K562 (cell line): ENCODE measurements at regions of chr21 and their contacts with region 1.

Region 1: GRCh38 chr21:45152265-45152746 is 77.9 kb downstream of the ADARB1 start:
- DNase-seq: peak; percentile 75 to 92 (median 84)
- ATAC-seq: peak; percentile 99
- H3K4me3 ChIP-seq: no peak overlapping the region; the same call in 1 of the 2 replicates
- H3K27ac ChIP-seq: peak overlapping the region; percentile 30; the same call in 1 of the 3 replicates
- H3K4me1 ChIP-seq: peaks cover 15 to 22% of the 10 kb centered on the region in 2 experiments; a peak in 4 of 5 replicates
- H3K27me3 ChIP-seq: no peaks in the 10 kb centered on the region
- CTCF ChIP-seq: peak; percentile 97
- EP300 ChIP-seq: peak; percentile 55; the same call in 1 of the 2 replicates
- POLR2A ChIP-seq: peak; percentile 44; the same call in 1 of the 2 replicates
- RAD21 ChIP-seq: peak; percentile 90 to 97

Region 2: GRCh38 chr21:45228171-45228641 is 75.9 kb after region 1 on chr21:
- CTCF ChIA-PET with region 1: no interaction called
- POLR2A ChIA-PET with region 1: no interaction called
- in situ Hi-C with region 1: no loop called
- intact Hi-C with region 1: loop called (anchors 5 kb)
- DNase-seq: no peak
- ATAC-seq: no peak
- H3K4me3 ChIP-seq: no peak overlapping the region
- H3K27ac ChIP-seq: no peak overlapping the region
- H3K4me1 ChIP-seq: peaks cover 0 to 5% of the 10 kb centered on the region in 2 experiments; a peak in 1 of 5 replicates
- H3K27me3 ChIP-seq: peaks cover 54 to 62% of the 10 kb centered on the region in 2 experiments
- CTCF ChIP-seq: no peak
- EP300 ChIP-seq: no peak
- POLR2A ChIP-seq: no peak
- RAD21 ChIP-seq: no peak

Region 3: GRCh38 chr21:45439161-45439872 is 287.0 kb after region 1 on chr21:
- CTCF ChIA-PET with region 1: interaction called, 9 read pairs
- POLR2A ChIA-PET with region 1: no interaction called
- in situ Hi-C with region 1: no loop called
- intact Hi-C with region 1: loop called (anchors 2 kb)
- DNase-seq: peak; percentile 90 to 91 (median 90)
- ATAC-seq: peak; percentile 98
- H3K4me3 ChIP-seq: no peak overlapping the region
- H3K27ac ChIP-seq: peak overlapping the region; percentile 55; the same call in 2 of the 3 replicates
- H3K4me1 ChIP-seq: peaks cover 10 to 61% of the 10 kb centered on the region in 2 experiments; a peak in 4 of 5 replicates
- H3K27me3 ChIP-seq: peaks cover 0 to 7% of the 10 kb centered on the region in 2 experiments; a peak in 2 of 5 replicates
- CTCF ChIP-seq: peak; percentile 97 to 98 (median 98)
- EP300 ChIP-seq: no peak
- POLR2A ChIP-seq: no peak
- RAD21 ChIP-seq: peak; percentile 100

Region 4: DNA sequence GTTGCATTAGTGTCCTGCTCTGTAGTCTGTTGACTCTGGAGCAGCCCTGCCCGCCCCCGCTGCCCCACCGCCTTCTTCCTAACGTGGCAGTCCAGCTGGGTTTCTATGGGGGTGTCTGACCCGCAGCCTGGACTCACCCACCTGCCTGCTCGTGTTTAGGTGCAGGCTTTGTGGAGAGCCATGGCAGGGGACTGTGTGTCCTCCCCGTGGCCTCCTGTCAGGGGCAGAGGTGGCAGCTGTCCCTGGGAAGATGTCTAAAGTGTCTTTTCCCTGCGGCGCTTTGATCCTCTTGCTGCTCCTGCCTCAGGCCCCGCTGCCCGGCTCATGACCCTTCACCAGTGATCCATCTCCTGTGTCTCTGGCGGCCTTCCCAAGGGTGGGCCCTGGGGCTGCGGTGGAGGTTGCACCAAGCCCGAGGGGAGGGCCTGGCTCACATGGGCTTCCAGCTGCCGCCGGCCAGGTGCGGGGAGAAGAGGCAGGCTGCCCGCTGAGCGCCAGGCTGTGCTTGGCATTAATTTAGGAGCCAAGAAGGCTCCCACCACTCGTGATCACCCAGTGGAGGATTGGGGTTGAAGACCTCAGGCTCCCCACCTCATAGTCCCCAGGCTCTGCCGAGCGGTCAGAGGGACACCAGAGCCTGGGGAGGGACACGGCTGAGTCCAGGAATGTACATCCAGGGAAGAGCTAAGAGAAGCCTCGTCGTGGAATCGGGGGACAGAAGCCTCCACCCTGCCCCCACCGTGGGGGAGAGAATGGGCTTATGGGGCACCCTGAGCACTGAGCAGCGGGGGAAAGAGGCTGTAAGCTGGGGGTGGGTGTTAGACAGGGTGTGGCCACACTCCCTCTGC is 296.7 kb after region 1 on chr21:
- CTCF ChIA-PET with region 1: no interaction called
- POLR2A ChIA-PET with region 1: interaction called, 3 read pairs
- in situ Hi-C with region 1: loop called (anchors 5 kb)
- intact Hi-C with region 1: no loop called
- DNase-seq: no peak
- ATAC-seq: no peak
- H3K4me3 ChIP-seq: no peak overlapping the region
- H3K27ac ChIP-seq: no peak overlapping the region
- H3K4me1 ChIP-seq: peaks cover 0 to 32% of the 10 kb centered on the region in 2 experiments; a peak in 1 of 5 replicates
- H3K27me3 ChIP-seq: peaks cover 0 to 14% of the 10 kb centered on the region in 2 experiments; a peak in 3 of 5 replicates
- CTCF ChIP-seq: no peak
- EP300 ChIP-seq: no peak
- POLR2A ChIP-seq: no peak
- RAD21 ChIP-seq: no peak